ENCODE measurements at regions of chr14 and their contacts with region 1.

Region 1: DNA sequence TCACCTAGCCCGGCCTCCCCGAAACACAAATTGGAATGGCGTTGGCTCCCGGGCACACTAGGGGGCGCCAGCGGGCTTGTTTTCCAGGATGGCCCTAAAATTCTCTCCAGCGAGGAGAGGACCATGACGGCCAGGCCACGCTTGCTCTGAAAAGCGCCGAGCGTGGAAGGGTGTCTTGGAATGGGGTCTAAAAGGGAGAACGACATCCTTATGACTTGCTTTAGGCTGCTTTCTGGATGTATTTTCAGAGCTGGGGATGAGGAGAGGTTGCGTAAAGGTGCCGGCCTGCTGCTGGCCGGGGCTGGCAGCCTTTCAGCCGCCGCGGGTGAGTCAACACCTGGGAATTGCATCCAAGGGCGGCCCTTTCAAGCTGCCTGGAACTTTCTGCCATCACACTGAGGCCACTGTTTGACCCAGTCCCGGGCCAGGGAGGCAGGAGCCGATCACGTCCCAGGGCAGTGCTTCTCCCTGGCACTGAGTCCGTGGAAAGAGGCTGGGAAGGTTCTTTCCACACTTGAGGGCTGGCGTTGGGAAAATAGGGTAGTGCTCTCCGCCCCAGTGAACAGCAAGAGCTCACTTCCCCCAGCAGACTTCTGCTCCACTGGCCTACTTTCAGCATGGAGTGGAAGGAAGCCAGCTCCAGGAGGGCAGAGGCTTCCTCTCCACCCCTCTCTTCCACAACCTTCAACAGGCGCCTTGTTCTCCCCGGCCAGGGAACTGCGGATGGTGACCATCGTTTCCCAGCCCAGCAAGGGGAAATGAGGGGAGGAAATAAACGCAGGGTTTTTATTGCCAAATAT is 216.2 kb downstream of the TTC8 start:
- DNase-seq: peak; percentile 57 to 77 (median 66)
- H3K4me3 ChIP-seq: peak overlapping the region; percentile 50
- H3K4me3 Mint-ChIP-seq: peak overlapping the region in 4 of 7 donors; percentile 27 to 66 (median 40)
- H3K27ac ChIP-seq: no peak overlapping the region
- H3K27ac Mint-ChIP-seq: peak overlapping the region in 1 of 8 donors; percentile 15
- H3K4me1 ChIP-seq: peaks cover 5% of the 10 kb centered on the region
- H3K4me1 Mint-ChIP-seq: peaks cover 6 to 8% (median 7%) of the 10 kb centered on the region in 3 donors
- H3K27me3 ChIP-seq: peaks cover 4% of the 10 kb centered on the region
- H3K27me3 Mint-ChIP-seq: peaks cover 17 to 42% of the 10 kb centered on the region in 2 donors

Region 2: DNA sequence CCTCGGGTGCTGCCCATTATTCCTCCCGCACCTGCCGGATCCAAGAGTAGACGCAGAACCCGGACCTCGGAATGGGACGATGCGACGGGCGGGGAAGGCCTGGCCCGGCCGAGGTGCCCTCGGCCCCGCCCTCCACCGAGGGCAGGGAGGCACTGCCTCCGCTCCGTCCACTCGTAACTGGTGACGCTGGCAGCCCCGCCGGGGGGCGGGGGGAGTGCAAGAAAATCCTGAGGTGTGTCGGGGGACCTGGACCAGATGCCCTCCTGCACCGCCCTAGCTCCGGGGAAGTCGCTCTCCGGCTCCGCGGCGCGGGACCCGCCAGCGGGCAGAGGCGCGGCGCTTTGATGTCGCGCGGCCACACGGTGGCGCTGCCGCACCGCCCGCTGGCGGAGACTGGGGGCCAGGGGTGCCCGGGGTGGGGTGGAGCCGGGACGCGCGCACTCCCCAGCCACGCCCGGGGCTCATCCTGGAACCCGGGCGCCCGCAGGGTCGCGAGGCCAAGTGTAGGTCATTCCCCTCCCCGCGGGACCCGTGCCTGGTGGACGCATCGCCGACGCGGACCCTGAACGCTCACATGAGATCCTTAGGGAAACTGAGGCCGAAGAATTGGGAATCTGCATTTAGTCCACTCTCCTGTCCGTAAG is 13.4 kb before region 1 on chr14:
- CTCF ChIA-PET with region 1: interaction called, 14 read pairs
- POLR2A ChIA-PET with region 1: no interaction called
- DNase-seq: peak; percentile 39 to 65 (median 53)
- H3K4me3 ChIP-seq: peak overlapping the region; percentile 64
- H3K4me3 Mint-ChIP-seq: peak overlapping the region in 6 of 7 donors; percentile 34 to 65 (median 62)
- H3K27ac ChIP-seq: no peak overlapping the region
- H3K27ac Mint-ChIP-seq: peak overlapping the region in 1 of 8 donors; percentile 26
- H3K4me1 ChIP-seq: peaks cover 10% of the 10 kb centered on the region
- H3K4me1 Mint-ChIP-seq: peaks cover 5 to 12% (median 11%) of the 10 kb centered on the region in 3 donors
- H3K27me3 ChIP-seq: peaks cover 22% of the 10 kb centered on the region
- H3K27me3 Mint-ChIP-seq: peaks cover 46 to 73% of the 10 kb centered on the region in 2 donors

Region 3: GRCh38 chr14:89466484-89466883 is 425.8 kb after region 1 on chr14:
- CTCF ChIA-PET with region 1: no interaction called
- POLR2A ChIA-PET with region 1: interaction called, 12 read pairs
- DNase-seq: peak; percentile 34 to 80 (median 55)
- H3K4me3 ChIP-seq: no peak overlapping the region
- H3K4me3 Mint-ChIP-seq: peak overlapping the region; percentile 9 to 87 (median 84)
- H3K27ac ChIP-seq: no peak overlapping the region
- H3K27ac Mint-ChIP-seq: peak overlapping the region; percentile 51 to 94 (median 90)
- H3K4me1 ChIP-seq: peaks cover 40% of the 10 kb centered on the region
- H3K4me1 Mint-ChIP-seq: peaks cover 56 to 83% (median 77%) of the 10 kb centered on the region in 3 donors
- H3K27me3 ChIP-seq: no peaks in the 10 kb centered on the region
- H3K27me3 Mint-ChIP-seq: no peaks in the 10 kb centered on the region

Region 4: GRCh38 chr14:89915114-89915878 is 874.6 kb after region 1 on chr14:
- CTCF ChIA-PET with region 1: interaction called, 16 read pairs
- POLR2A ChIA-PET with region 1: no interaction called
- DNase-seq: peak; percentile 24 to 62 (median 44)
- H3K4me3 ChIP-seq: no peak overlapping the region
- H3K4me3 Mint-ChIP-seq: no peak overlapping the region
- H3K27ac ChIP-seq: no peak overlapping the region
- H3K27ac Mint-ChIP-seq: no peak overlapping the region
- H3K4me1 ChIP-seq: no peaks in the 10 kb centered on the region
- H3K4me1 Mint-ChIP-seq: peaks cover 2 to 4% (median 4%) of the 10 kb centered on the region in 3 donors
- H3K27me3 ChIP-seq: no peaks in the 10 kb centered on the region
- H3K27me3 Mint-ChIP-seq: peaks cover 3 to 7% of the 10 kb centered on the region in 2 donors

Region 5: GRCh38 chr14:89921346-89921745 is 880.7 kb after region 1 on chr14:
- CTCF ChIA-PET with region 1: interaction called, 10 read pairs
- POLR2A ChIA-PET with region 1: no interaction called
- DNase-seq: no peak
- H3K4me3 ChIP-seq: no peak overlapping the region
- H3K4me3 Mint-ChIP-seq: no peak overlapping the region
- H3K27ac ChIP-seq: no peak overlapping the region
- H3K27ac Mint-ChIP-seq: no peak overlapping the region
- H3K4me1 ChIP-seq: no peaks in the 10 kb centered on the region
- H3K4me1 Mint-ChIP-seq: no peaks in the 10 kb centered on the region
- H3K27me3 ChIP-seq: no peaks in the 10 kb centered on the region
- H3K27me3 Mint-ChIP-seq: peaks cover 0 to 2% of the 10 kb centered on the region in 2 donors